ENCODE measurements at regions of chr15 and their contacts with region 1.

Region 1: DNA sequence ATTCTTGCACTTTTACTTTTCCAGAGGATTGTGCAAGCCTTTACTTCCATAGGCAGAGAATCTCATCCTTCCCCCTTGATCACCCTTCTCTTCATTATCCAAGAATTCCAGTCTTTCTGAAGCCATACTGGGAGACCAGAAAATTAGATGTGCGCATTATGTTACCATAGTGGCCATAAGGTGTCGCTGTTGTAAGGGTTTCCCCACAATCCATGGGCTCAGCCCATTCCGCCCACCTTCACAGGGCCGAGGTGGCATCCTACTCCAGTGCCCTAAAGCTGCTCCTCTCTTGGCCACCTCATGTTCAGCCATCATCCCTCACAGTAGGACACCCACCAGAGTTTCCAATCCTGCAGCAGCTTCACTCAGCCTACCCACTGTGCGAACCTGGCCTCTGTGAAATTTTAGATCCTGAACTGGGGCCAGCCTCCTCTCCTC is 35.0 kb downstream of the CTSH start:
- DNase-seq: peak; percentile 71
- ATAC-seq: peak; percentile 50
- H3K4me3 ChIP-seq: no peak overlapping the region
- H3K4me3 Mint-ChIP-seq: no peak overlapping the region
- H3K27ac ChIP-seq: no peak overlapping the region
- H3K27ac Mint-ChIP-seq: peak overlapping the region; percentile 18
- H3K4me1 ChIP-seq: no peaks in the 10 kb centered on the region
- H3K4me1 Mint-ChIP-seq: peaks cover 18% of the 10 kb centered on the region
- H3K27me3 ChIP-seq: no peaks in the 10 kb centered on the region
- H3K27me3 Mint-ChIP-seq: no peaks in the 10 kb centered on the region
- CTCF ChIP-seq: peak; percentile 79

Region 2: DNA sequence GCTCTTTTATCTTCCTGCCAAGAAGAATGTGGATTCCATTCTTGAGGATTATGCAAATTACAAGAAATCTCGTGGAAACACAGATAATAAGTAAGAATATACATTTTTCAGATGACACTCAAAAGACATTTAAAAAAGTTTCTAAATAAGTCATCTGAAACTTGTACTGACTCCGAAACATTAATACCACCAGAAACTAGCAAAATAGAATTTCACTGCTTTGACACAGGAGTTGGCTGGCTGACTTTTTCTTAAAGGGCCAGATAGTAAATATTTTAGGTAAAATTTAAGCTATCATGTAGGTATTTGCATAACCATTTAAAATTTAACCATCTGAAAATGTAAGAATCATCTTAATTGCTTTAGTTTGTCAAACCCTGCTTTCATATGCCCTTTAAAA is 16.3 kb before region 1 on chr15:
- CTCF ChIA-PET with region 1: interaction called, 10 read pairs
- POLR2A ChIA-PET with region 1: no interaction called
- intact Hi-C with region 1: loop called (anchors 2 kb)
- DNase-seq: no peak
- ATAC-seq: no peak
- H3K4me3 ChIP-seq: no peak overlapping the region
- H3K4me3 Mint-ChIP-seq: no peak overlapping the region
- H3K27ac ChIP-seq: no peak overlapping the region
- H3K27ac Mint-ChIP-seq: no peak overlapping the region
- H3K4me1 ChIP-seq: no peaks in the 10 kb centered on the region
- H3K4me1 Mint-ChIP-seq: no peaks in the 10 kb centered on the region
- H3K27me3 ChIP-seq: no peaks in the 10 kb centered on the region
- H3K27me3 Mint-ChIP-seq: no peaks in the 10 kb centered on the region
- CTCF ChIP-seq: no peak

Region 3: GRCh38 chr15:78938658-78939488 is 29.1 kb after region 1 on chr15:
- CTCF ChIA-PET with region 1: interaction called, 26 read pairs
- POLR2A ChIA-PET with region 1: no interaction called
- intact Hi-C with region 1: no loop called
- DNase-seq: peak; percentile 86
- ATAC-seq: peak; percentile 82
- H3K4me3 ChIP-seq: peak overlapping the region in 3 of 5 experiments; percentile 34 to 42 (median 35)
- H3K4me3 Mint-ChIP-seq: peak overlapping the region; percentile 73
- H3K27ac ChIP-seq: peak overlapping the region; percentile 84 to 86
- H3K27ac Mint-ChIP-seq: peak overlapping the region; percentile 91
- H3K4me1 ChIP-seq: peaks cover 68 to 81% of the 10 kb centered on the region in 2 donors
- H3K4me1 Mint-ChIP-seq: peaks cover 65% of the 10 kb centered on the region
- H3K27me3 ChIP-seq: no peaks in the 10 kb centered on the region
- H3K27me3 Mint-ChIP-seq: no peaks in the 10 kb centered on the region
- CTCF ChIP-seq: no peak

Region 4: DNA sequence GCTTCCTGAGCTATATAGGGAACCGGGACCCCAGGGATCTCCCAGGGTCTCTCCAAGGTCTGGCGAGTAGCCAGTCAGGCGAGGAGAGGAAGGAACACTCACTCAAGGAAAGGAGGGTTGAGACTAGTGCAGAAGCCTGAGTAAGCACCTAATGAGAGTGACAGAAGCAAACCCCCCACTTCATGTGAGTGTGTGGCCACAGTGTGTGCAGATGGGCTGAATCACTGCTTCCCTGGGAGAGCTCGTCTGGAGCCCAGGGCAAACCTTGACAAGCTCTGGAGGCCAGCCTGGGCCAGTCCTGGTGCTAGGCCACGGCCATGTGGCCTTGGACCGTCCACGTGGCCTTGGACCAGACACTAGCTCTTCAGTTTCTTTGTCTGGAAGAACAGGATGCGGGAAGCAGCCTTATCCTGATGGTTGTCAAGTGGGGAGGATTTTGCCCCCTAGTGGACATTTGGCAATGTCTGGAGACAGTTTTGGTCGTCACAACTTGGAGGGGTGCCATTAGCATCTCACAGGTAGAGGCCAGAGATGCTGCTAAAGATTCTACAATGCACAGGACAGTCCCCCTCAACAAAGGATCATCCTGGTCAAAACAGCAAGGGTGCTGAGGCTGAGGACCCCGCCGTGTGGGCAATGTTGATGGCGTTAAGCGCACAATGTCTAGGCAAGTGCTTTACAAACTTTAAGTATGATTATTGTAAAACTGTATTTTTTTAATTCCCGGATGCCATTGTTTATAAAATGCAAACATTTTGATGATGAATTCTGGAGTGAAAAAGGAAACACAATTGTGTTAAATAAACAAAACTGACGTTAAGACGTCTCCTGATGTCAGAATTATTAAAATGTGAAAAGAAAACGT is 69.9 kb after region 1 on chr15:
- CTCF ChIA-PET with region 1: interaction called, 34 read pairs
- POLR2A ChIA-PET with region 1: no interaction called
- intact Hi-C with region 1: no loop called
- DNase-seq: peak; percentile 66
- ATAC-seq: no peak
- H3K4me3 ChIP-seq: peak overlapping the region in 2 of 5 experiments; percentile 12 to 18
- H3K4me3 Mint-ChIP-seq: peak overlapping the region; percentile 83
- H3K27ac ChIP-seq: peak overlapping the region in 1 of 2 donors; percentile 5
- H3K27ac Mint-ChIP-seq: peak overlapping the region; percentile 96
- H3K4me1 ChIP-seq: peaks cover 38 to 46% of the 10 kb centered on the region in 2 donors
- H3K4me1 Mint-ChIP-seq: peaks cover 42% of the 10 kb centered on the region
- H3K27me3 ChIP-seq: peaks cover 0 to 2% (median 0%) of the 10 kb centered on the region in 4 experiments
- H3K27me3 Mint-ChIP-seq: peaks cover 2% of the 10 kb centered on the region
- CTCF ChIP-seq: peak; percentile 68